Activated CD4-positive, alpha-beta memory T cell treated with anti-CD3 and anti-CD28 coated beads, Interleukin-2, amount 10 ng/mL, durations not matched to agents 7 days and 5 days (primary cell): ENCODE measurements at regions of chr1 and their contacts with region 1.

Region 1: DNA sequence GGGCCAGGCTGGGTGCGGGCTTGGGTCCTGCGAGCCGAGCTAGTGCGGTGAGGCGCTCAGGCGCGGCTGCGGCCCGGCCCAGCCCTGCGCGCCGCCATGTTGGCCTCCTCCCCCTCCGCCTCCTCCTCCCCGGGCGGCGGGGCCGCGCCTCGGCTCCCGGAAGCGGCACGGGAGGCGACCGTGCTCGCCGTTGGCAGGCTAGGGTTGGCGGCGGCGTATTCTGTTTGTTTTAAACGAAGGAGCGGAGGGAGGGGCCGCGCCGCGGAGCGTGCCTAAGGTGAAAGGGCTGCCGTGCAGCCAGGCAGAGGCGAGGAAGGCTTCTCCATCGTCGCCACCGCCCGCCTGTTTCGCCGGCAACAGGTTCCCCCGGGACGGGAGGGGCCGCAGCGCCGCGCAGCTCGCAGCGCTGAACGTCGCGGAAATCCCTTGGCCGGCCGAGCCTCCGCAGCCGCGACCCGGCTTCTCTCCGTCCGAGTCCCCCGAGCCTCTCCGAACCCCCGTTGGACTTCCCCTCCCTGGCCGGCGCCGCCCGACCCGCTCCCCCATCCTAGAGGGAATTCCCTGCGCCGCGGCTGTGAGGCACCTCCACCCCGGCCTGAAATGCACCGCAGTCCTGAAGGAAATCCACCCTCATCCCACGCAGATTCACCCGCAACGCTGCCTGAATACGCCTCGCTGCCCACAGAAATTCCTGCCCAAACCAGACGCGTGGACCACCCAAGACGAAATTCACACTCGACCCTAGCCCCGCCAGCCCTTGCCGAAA is at the start of gene USP24:
- DNase-seq: peak; percentile 86
- H3K4me3 Mint-ChIP-seq: peak within 1 kb of the TSS; percentile 95
- H3K27ac Mint-ChIP-seq: peak within 1 kb of the TSS; percentile 96
- H3K4me1 Mint-ChIP-seq: peaks cover 61% of the 10 kb centered on the region
- H3K27me3 Mint-ChIP-seq: no peaks in the 10 kb centered on the region
- total RNA-seq, gene USP24: 34.9 to 35.6 TPM

Region 2: GRCh38 chr1:55204997-55205396 is 10.4 kb before region 1 on chr1:
- CTCF ChIA-PET with region 1: interaction called, 3 read pairs
- POLR2A ChIA-PET with region 1: interaction called, 31 read pairs
- DNase-seq: no peak
- H3K4me3 Mint-ChIP-seq: no peak overlapping the region
- H3K27ac Mint-ChIP-seq: no peak overlapping the region
- H3K4me1 Mint-ChIP-seq: peaks cover 54% of the 10 kb centered on the region
- H3K27me3 Mint-ChIP-seq: no peaks in the 10 kb centered on the region

Region 3: DNA sequence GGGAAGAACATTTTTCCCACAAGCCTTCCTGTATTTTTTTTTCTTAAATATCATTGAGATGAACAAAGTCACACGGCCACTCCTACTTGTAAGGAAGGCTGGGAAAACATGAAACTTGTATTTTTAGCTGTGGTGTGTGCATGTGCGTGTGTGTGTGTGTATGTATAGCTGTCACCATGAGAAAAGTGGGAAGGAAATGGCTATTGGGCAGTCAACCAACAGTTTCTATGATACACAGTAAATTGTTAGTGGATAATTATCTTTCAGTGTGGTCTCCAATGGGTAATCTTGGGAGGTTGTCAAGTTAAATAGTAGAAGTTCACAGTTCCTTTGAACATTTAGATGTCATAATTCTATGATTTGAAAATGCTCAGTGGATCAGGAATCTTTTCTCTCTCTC is 132.4 kb after region 1 on chr1:
- CTCF ChIA-PET with region 1: no interaction called
- POLR2A ChIA-PET with region 1: no interaction called
- DNase-seq: no peak
- H3K4me3 Mint-ChIP-seq: no peak overlapping the region
- H3K27ac Mint-ChIP-seq: no peak overlapping the region
- H3K4me1 Mint-ChIP-seq: no peaks in the 10 kb centered on the region
- H3K27me3 Mint-ChIP-seq: peaks cover 18% of the 10 kb centered on the region